GM10248 (cell line): ENCODE measurements at regions of chr16 and their contacts with region 1.

Region 1: DNA sequence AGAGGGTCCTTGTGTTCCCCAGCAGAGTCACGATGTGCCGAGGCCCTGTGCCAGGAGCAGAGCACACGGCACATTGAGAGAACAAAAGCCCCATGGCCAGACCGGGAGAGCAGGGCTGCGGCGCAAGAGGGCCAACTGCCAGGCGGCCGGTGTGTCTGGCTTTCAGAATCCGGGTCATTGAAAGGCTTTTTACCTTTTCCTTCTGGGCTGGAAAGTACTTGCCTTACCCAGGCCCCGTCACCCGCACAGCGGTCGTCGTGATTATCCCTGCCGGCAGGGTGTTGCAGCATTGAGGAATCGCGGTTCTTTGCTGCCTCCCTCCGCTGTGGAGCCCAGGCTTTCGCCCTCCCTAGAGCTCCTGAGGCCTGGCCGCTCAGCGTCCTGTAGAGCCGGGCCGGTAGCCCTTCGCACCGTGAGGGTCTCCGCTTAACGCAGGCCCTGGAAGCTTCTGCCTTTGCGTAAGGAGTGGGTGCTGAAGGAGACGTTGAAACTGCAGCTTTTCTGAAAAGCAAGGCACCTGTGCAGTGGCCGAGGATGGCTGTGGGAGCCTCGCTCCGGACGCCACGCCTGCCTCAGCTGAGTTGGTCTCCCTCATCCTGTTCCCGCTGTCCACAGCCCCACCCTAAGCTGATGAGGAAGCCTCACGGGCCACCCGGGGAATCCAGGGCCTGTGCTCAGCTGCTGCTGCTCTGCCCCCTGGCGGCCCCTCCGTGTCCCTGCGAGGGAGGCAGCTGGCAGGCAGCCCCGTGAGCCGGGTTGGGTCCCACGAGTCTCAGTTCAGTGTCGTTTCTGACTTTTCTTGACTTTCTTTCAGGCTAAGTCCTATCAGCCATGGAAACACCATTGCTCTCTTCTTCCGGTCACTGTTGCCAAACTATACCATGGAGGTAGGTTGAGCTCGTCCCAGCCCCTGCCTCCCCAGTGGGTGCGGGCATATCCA is 8.6 kb upstream of the MC1R start:
- DNase-seq: peak; percentile 85
- CTCF ChIP-seq: peak; percentile 87

Region 2: GRCh38 chr16:89700100-89700648 is 209.9 kb before region 1 on chr16:
- CTCF ChIA-PET with region 1: interaction called, 16 read pairs
- POLR2A ChIA-PET with region 1: no interaction called
- DNase-seq: peak; percentile 96
- CTCF ChIP-seq: peak; percentile 73

Region 3: DNA sequence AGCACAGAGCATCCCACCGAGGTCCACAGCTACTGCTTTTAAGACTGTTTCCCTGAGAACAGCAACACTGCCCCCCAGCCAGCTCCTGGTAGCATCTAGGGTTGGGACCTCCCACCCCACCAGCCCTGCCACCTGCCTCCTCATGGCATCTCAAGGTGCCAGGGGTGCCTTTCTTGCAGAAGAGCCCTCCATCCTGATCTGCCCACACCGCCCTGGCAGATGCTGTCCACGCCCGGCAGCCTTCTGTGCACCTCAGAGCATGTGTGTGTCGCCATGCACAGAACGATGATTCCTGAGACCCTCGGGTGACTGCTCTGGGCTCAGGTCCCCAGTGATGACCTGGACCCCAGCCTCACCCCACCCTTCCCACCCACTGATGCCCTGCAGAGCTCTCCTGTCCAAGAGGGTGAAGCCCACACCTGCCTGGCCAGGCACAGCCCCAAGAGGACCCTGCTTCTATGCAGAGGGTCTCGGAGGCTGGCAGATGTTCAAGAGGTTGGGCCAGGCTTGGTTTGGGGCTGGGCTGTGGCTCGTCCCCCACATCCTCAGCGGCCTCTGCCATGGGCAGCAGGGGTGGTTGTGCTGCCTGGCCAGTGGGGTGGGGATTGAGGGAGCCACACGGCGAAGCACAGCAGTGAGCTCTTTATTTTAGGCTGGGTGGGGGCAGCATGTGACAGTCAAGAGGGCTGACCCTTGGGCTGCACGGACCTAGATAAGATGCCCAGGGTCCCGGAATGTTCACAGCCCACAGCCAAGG is 203.4 kb before region 1 on chr16:
- CTCF ChIA-PET with region 1: interaction called, 29 read pairs
- POLR2A ChIA-PET with region 1: interaction called, 3 read pairs
- DNase-seq: no peak
- CTCF ChIP-seq: no peak

Region 4: GRCh38 chr16:89898201-89898967 is 11.7 kb before region 1 on chr16:
- CTCF ChIA-PET with region 1: interaction called, 27 read pairs
- POLR2A ChIA-PET with region 1: no interaction called
- DNase-seq: no peak
- CTCF ChIP-seq: no peak

Region 5: GRCh38 chr16:89922884-89923690 is 13.0 kb after region 1 on chr16 and contains the start of gene TUBB3:
- CTCF ChIA-PET with region 1: interaction called, 26 read pairs
- POLR2A ChIA-PET with region 1: no interaction called
- DNase-seq: peak; percentile 82
- CTCF ChIP-seq: no peak

Region 6: GRCh38 chr16:89931305-89931896 is 21.4 kb after region 1 on chr16:
- CTCF ChIA-PET with region 1: interaction called, 15 read pairs
- POLR2A ChIA-PET with region 1: no interaction called
- DNase-seq: no peak
- CTCF ChIP-seq: no peak

Region 7: GRCh38 chr16:89949121-89949742 is 39.2 kb after region 1 on chr16:
- CTCF ChIA-PET with region 1: interaction called, 12 read pairs
- POLR2A ChIA-PET with region 1: interaction called, 5 read pairs
- DNase-seq: no peak
- CTCF ChIP-seq: no peak

Region 8: DNA sequence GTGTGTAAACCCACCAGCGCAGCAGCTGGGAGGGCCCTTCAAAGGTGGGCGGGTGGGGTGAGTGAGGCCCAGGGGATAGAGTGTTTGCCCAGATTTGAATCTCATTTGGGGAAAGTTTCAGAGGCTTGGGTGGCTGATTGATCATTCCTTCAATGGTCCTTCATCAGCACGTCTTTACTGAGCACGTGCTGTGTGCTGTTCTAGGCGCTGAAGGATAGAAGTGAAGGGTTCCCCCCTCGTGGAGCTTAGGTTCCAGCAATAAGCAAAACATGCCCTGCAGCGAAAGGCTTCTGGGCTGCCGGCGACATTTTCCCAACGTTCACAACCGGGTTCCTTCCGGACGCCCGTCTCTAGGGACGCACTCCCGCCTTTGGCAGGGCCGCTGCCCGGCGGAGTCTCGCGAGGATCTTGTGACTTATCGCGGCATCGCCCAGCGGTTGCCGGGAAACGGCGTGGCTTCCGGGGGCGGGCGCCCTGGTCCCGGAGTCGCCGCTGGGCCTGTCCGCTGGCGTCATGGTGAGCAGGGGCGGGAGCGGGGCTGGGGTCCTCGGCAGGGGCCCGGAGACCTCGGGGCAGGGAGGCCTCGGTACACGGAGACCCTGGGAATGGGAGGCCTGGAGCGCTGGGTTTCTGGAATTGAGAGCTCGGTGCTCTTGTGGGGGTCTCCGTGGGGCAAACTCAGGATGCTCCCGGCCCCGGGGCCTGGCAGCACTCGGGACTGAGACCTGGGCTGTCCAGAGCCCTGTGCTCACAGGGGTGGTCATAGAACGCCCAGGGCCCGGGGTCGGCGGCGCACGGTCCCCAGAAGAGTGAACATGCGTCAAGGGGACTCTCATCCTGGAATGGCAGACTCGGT is 112.4 kb after region 1 on chr16:
- CTCF ChIA-PET with region 1: no interaction called
- POLR2A ChIA-PET with region 1: no interaction called
- DNase-seq: peak; percentile 95
- CTCF ChIP-seq: no peak